T-cell (primary cell): ENCODE measurements at regions of chr6 and their contacts with region 1.

Region 1: GRCh38 chr6:159084493-159085091 is 39.8 kb upstream of the TAGAP start:
- DNase-seq: no peak
- ATAC-seq: no peak
- H3K4me3 ChIP-seq: no peak overlapping the region
- H3K4me3 Mint-ChIP-seq: no peak overlapping the region
- H3K27ac ChIP-seq: no peak overlapping the region
- H3K27ac Mint-ChIP-seq: no peak overlapping the region
- H3K4me1 ChIP-seq: peaks cover 5 to 12% of the 10 kb centered on the region in 2 experiments
- H3K4me1 Mint-ChIP-seq: peaks cover 11 to 17% (median 12%) of the 10 kb centered on the region in 3 donors
- H3K27me3 ChIP-seq: no peaks in the 10 kb centered on the region
- H3K27me3 Mint-ChIP-seq: no peaks in the 10 kb centered on the region

Region 2: GRCh38 chr6:158826801-158827573 is 257.6 kb before region 1 on chr6:
- CTCF ChIA-PET with region 1: interaction called in 1 of 2 experiments, 4 read pairs
- POLR2A ChIA-PET with region 1: interaction called in 1 of 2 experiments, 13 read pairs
- DNase-seq: no peak
- ATAC-seq: no peak
- H3K4me3 ChIP-seq: no peak overlapping the region
- H3K4me3 Mint-ChIP-seq: no peak overlapping the region
- H3K27ac ChIP-seq: no peak overlapping the region
- H3K27ac Mint-ChIP-seq: no peak overlapping the region
- H3K4me1 ChIP-seq: peaks cover 0 to 2% of the 10 kb centered on the region in 2 experiments
- H3K4me1 Mint-ChIP-seq: peaks cover 0 to 17% (median 4%) of the 10 kb centered on the region in 3 donors
- H3K27me3 ChIP-seq: no peaks in the 10 kb centered on the region
- H3K27me3 Mint-ChIP-seq: no peaks in the 10 kb centered on the region

Region 3: GRCh38 chr6:158991017-158991723 is 93.4 kb before region 1 on chr6:
- CTCF ChIA-PET with region 1: no interaction called
- POLR2A ChIA-PET with region 1: no interaction called
- DNase-seq: no peak
- ATAC-seq: peak in 1 of 4 experiments; percentile 23
- H3K4me3 ChIP-seq: no peak overlapping the region
- H3K4me3 Mint-ChIP-seq: no peak overlapping the region
- H3K27ac ChIP-seq: no peak overlapping the region
- H3K27ac Mint-ChIP-seq: no peak overlapping the region
- H3K4me1 ChIP-seq: peaks cover 0 to 3% of the 10 kb centered on the region in 2 experiments
- H3K4me1 Mint-ChIP-seq: peaks cover 0 to 19% (median 18%) of the 10 kb centered on the region in 3 donors
- H3K27me3 ChIP-seq: no peaks in the 10 kb centered on the region
- H3K27me3 Mint-ChIP-seq: no peaks in the 10 kb centered on the region

Region 4: GRCh38 chr6:159062564-159062945 is 22.0 kb before region 1 on chr6:
- CTCF ChIA-PET with region 1: interaction called, 4 to 10 read pairs
- POLR2A ChIA-PET with region 1: interaction called, 4 read pairs
- DNase-seq: peak; percentile 34 to 86 (median 67)
- ATAC-seq: peak; percentile 93 to 94 (median 94)
- H3K4me3 ChIP-seq: no peak overlapping the region
- H3K4me3 Mint-ChIP-seq: peak overlapping the region; percentile 52 to 77 (median 55)
- H3K27ac ChIP-seq: peak overlapping the region; percentile 94
- H3K27ac Mint-ChIP-seq: peak overlapping the region; percentile 98 to 99
- H3K4me1 ChIP-seq: peaks cover 36 to 74% of the 10 kb centered on the region in 2 experiments
- H3K4me1 Mint-ChIP-seq: peaks cover 92 to 97% (median 96%) of the 10 kb centered on the region in 3 donors
- H3K27me3 ChIP-seq: no peaks in the 10 kb centered on the region
- H3K27me3 Mint-ChIP-seq: no peaks in the 10 kb centered on the region

Region 5: DNA sequence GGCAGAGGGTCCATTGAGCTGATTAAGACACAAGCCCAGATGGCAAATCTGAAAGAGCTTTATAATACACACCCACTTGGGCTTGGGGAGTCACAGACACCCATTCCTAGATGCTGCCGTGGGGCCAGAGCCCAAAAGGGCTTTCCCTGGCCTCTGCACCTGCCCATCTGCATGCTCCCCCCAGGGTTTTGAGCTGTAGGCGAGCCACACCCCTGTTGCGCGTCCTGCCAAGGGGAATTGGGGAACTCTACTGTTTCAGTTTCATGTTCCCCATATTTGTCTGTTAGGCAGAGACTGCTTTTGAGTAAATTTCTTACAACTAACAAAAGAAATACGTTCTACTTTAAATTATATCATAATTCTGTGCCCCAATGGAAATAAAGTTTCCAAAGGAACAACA is 31.8 kb after region 1 on chr6:
- CTCF ChIA-PET with region 1: no interaction called
- POLR2A ChIA-PET with region 1: no interaction called
- DNase-seq: peak in 1 of 35 experiments; percentile 49
- ATAC-seq: no peak
- H3K4me3 ChIP-seq: no peak overlapping the region
- H3K4me3 Mint-ChIP-seq: no peak overlapping the region
- H3K27ac ChIP-seq: no peak overlapping the region
- H3K27ac Mint-ChIP-seq: no peak overlapping the region
- H3K4me1 ChIP-seq: peaks cover 0 to 10% of the 10 kb centered on the region in 2 experiments
- H3K4me1 Mint-ChIP-seq: peaks cover 0 to 37% (median 19%) of the 10 kb centered on the region in 3 donors
- H3K27me3 ChIP-seq: no peaks in the 10 kb centered on the region
- H3K27me3 Mint-ChIP-seq: no peaks in the 10 kb centered on the region

Region 6: DNA sequence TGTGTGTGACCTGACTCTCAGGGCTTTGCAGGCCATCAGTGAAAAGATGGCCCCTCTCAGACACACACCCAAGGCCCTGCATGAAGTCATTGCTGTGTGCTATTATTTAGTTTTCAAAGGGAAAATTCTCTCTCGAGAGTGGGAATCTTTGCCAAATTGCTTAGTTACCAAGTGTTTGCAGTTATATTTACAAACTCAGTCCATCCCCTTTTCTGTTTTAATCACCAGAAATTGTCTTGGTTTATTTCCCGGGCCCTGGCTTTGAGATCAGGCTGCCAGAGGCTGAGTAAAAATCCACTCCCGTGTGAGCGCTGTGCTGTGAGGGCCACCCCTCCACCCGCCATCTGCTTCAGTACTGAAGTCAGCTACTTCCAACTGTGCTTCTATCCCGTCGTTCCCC is 445.3 kb after region 1 on chr6:
- CTCF ChIA-PET with region 1: no interaction called
- POLR2A ChIA-PET with region 1: no interaction called
- DNase-seq: no peak
- ATAC-seq: no peak
- H3K4me3 ChIP-seq: no peak overlapping the region
- H3K4me3 Mint-ChIP-seq: no peak overlapping the region
- H3K27ac ChIP-seq: no peak overlapping the region
- H3K27ac Mint-ChIP-seq: no peak overlapping the region
- H3K4me1 ChIP-seq: no peaks in the 10 kb centered on the region
- H3K4me1 Mint-ChIP-seq: no peaks in the 10 kb centered on the region
- H3K27me3 ChIP-seq: peaks cover 0 to 26% of the 10 kb centered on the region in 2 experiments
- H3K27me3 Mint-ChIP-seq: peaks cover 28 to 33% of the 10 kb centered on the region in 2 donors